ENCODE measurements at regions of chr17 and their contacts with region 1.

Region 1: GRCh38 chr17:82037113-82037888 is at the start of gene DCXR:
- DNase-seq: peak; percentile 98 to 99
- H3K4me3 ChIP-seq: peak within 1 kb of the TSS; percentile 79
- H3K4me3 Mint-ChIP-seq: peak within 1 kb of the TSS; percentile 86
- H3K27ac Mint-ChIP-seq: peak within 1 kb of the TSS; percentile 91
- H3K4me1 ChIP-seq: peaks cover 21% of the 10 kb centered on the region
- H3K4me1 Mint-ChIP-seq: peaks cover 5% of the 10 kb centered on the region
- H3K27me3 ChIP-seq: no peaks in the 10 kb centered on the region
- H3K27me3 Mint-ChIP-seq: no peaks in the 10 kb centered on the region
- CTCF ChIP-seq: peak; percentile 80 to 87
- total RNA-seq, gene DCXR: 197 and 208 TPM in 2 replicates

Region 2: DNA sequence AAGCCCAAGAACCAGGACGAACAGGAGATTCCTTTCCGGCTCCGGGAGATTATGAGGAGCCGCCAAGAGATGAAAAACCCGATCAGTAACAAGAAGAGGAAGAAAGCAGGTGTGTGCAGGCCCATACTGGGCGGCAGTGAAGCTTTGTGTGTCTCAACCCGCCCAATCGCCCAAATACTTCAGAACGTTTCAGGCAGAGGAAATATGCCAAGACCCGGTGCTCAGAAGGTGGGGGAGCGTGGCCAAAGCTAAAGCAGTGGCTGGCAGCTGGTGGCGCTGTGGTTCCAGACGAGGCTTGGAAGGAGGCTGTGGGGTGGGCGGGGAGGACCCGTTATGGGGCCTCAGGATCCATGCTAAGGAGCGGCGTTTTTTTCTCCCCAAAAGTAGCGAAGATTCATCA is 369.5 kb before region 1 on chr17:
- CTCF ChIA-PET with region 1: no interaction called
- POLR2A ChIA-PET with region 1: interaction called, 13 read pairs
- intact Hi-C with region 1: no loop called
- DNase-seq: no peak
- H3K4me3 ChIP-seq: no peak overlapping the region; the same call in 1 of the 2 replicates
- H3K4me3 Mint-ChIP-seq: peak overlapping the region; percentile 90
- H3K27ac Mint-ChIP-seq: peak overlapping the region; percentile 86
- H3K4me1 ChIP-seq: peaks cover 14% of the 10 kb centered on the region
- H3K4me1 Mint-ChIP-seq: peaks cover 24% of the 10 kb centered on the region
- H3K27me3 ChIP-seq: no peaks in the 10 kb centered on the region
- H3K27me3 Mint-ChIP-seq: no peaks in the 10 kb centered on the region
- CTCF ChIP-seq: no peak

Region 3: DNA sequence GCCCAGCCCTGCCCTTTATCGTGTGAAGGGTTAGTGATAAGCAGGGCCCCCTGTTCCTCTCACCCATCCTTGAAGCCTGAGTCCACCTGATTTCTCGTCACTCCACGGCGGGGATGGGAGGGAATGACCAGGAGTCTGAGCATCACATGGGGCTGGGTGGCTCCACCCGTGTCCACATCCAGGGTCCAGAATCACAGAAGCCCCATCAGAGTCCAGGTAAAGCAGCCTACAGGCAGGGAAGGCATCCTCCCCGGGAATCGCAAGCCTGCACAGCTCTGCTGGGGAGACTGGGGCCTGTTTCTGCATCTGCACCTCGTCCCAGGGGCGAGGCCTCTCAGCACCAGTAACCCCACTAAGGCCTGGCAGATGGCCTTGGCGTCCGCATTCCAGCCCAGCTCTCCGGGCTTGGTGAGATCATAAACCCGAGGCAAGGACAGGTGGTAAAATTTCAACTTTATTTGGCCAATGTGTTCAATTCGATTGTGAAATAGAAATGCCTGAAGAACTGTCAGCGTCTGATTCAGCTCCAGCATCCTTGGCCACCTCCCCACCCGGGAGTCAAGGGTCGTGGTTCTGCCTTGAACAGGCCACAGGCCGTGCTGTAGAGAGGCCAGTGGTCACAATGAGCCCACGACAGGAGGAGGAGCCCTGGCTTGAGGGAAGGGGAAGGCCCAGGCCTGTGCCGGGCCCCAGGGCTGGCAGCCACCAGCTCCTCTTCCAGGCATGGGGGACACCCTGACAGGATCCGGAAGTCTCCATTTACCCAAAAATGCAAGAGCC is 194.4 kb before region 1 on chr17:
- CTCF ChIA-PET with region 1: no interaction called
- POLR2A ChIA-PET with region 1: no interaction called
- intact Hi-C with region 1: no loop called
- DNase-seq: no peak
- H3K4me3 ChIP-seq: no peak overlapping the region
- H3K4me3 Mint-ChIP-seq: no peak overlapping the region
- H3K27ac Mint-ChIP-seq: peak overlapping the region; percentile 3
- H3K4me1 ChIP-seq: peaks cover 3% of the 10 kb centered on the region; the same call in 1 of the 2 replicates
- H3K4me1 Mint-ChIP-seq: no peaks in the 10 kb centered on the region
- H3K27me3 ChIP-seq: no peaks in the 10 kb centered on the region
- H3K27me3 Mint-ChIP-seq: no peaks in the 10 kb centered on the region
- CTCF ChIP-seq: no peak

Region 4: GRCh38 chr17:82051776-82052637 is 14.7 kb after region 1 on chr17 and contains the starts of genes GPS1 and RFNG:
- CTCF ChIA-PET with region 1: interaction called, 14 read pairs
- POLR2A ChIA-PET with region 1: interaction called, 16 read pairs
- intact Hi-C with region 1: loop called (anchors 1 kb)
- DNase-seq: peak; percentile 71 to 84
- H3K4me3 ChIP-seq: peak within 1 kb of the TSS; percentile 94
- H3K4me3 Mint-ChIP-seq: peak within 1 kb of the TSS; percentile 80
- H3K27ac Mint-ChIP-seq: peak within 1 kb of the TSS; percentile 46
- H3K4me1 ChIP-seq: peaks cover 8% of the 10 kb centered on the region
- H3K4me1 Mint-ChIP-seq: no peaks in the 10 kb centered on the region
- H3K27me3 ChIP-seq: no peaks in the 10 kb centered on the region
- H3K27me3 Mint-ChIP-seq: no peaks in the 10 kb centered on the region
- CTCF ChIP-seq: no peak
- total RNA-seq, gene GPS1: 185 and 195 TPM in 2 replicates
- total RNA-seq, gene RFNG: 33.0 and 35.5 TPM in 2 replicates

Region 5: DNA sequence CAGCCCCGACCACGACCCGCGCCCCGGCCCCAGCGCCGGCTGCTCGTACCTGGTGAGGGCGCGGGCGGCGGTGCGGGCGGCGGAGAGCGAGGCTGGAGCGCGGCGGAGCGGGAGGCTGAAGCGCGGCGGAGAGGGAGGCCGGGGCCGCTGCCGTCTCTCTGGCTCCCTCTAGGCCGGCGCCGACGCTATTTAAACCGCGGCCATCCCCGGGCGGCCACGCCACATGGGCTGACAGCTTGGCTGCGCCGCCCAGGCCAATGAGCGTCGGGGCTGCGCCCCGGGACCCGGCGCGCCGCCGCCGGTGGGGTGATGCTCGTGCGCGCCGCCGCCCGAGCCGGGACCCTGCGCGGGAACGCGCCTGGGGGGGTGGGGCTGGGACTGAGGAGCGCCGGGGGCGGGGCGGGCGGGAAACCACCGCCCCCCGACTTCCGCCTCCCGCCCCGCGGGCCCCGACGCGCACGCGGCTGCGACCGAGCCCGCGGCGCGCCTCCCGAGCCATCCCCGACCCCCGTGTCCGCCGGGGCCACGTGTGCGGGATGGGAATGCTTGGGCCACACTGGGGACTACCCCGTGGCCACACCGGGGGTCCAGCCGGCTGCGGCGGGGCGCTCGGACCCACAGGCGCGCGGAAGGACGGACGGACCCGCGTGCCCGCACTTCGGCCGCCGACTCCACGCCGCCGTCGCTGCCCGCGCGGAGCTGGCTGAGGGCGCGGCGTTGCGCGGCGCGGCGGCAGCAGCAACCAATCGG is 60.9 kb after region 1 on chr17 and contains the start of gene FASN:
- CTCF ChIA-PET with region 1: interaction called, 12 read pairs
- POLR2A ChIA-PET with region 1: interaction called, 17 read pairs
- intact Hi-C with region 1: loop called (anchors 2 kb)
- DNase-seq: peak; percentile 95 to 97
- H3K4me3 ChIP-seq: peak within 1 kb of the TSS; percentile 93
- H3K4me3 Mint-ChIP-seq: peak within 1 kb of the TSS; percentile 76
- H3K27ac Mint-ChIP-seq: peak within 1 kb of the TSS; percentile 86
- H3K4me1 ChIP-seq: peaks cover 52% of the 10 kb centered on the region
- H3K4me1 Mint-ChIP-seq: peaks cover 5% of the 10 kb centered on the region
- H3K27me3 ChIP-seq: no peaks in the 10 kb centered on the region
- H3K27me3 Mint-ChIP-seq: no peaks in the 10 kb centered on the region
- CTCF ChIP-seq: peak; percentile 26 to 59
- total RNA-seq, gene FASN: 330 and 359 TPM in 2 replicates

Measured in Caco-2 (cell line).